ENCODE measurements at regions of chr1 and their contacts with region 1.

Region 1: DNA sequence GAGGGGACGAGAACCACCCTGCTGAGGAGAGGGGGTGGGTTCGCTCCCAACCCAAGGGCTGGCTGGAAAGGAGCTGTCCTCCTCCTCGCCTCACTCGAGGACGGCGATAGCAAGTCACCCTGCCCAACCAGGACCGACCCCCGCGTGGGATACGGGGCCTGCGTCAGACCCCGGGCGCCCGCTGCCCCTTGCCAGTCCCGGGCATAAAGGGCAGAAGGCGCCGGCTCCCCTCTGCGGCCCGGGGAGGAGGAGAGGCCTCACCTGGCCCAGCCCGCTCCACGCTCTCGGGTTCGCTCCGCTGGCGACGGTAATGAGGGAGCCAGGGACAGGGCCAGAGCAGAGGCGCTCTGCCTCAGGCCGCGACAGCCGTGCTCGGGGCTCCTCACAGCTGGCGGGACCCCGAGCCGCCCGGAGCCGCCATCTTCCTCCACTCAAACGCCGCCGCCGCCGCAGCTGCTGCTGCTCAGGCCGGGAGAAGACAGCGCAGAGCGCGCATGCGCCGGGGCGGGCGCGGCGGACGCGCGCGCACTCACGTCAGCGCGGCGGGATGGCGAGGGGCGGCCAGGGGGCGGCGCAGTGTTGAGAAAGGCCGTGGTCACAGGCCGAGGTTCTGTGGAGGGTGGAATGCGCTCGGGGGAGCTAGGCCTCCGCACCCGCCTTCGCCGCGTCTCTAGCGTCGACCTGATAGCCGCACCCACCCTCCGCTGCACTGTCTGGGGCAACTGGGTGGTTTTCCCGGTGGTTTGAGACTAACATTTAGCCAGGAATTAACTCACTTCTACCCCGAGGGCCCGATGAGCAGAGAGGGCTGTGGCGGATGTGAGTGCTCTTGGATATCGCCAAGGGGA is at the start of gene FBXO42:
- DNase-seq: peak; percentile 80
- H3K4me3 ChIP-seq: peak within 1 kb of the TSS; percentile 97
- H3K27ac ChIP-seq: peak within 1 kb of the TSS; percentile 90
- H3K27me3 ChIP-seq: no peaks in the 10 kb centered on the region
- CTCF ChIP-seq: peak; percentile 57
- polyA plus RNA-seq, gene FBXO42: 15.1 and 16.8 TPM in 2 replicates

Region 2: DNA sequence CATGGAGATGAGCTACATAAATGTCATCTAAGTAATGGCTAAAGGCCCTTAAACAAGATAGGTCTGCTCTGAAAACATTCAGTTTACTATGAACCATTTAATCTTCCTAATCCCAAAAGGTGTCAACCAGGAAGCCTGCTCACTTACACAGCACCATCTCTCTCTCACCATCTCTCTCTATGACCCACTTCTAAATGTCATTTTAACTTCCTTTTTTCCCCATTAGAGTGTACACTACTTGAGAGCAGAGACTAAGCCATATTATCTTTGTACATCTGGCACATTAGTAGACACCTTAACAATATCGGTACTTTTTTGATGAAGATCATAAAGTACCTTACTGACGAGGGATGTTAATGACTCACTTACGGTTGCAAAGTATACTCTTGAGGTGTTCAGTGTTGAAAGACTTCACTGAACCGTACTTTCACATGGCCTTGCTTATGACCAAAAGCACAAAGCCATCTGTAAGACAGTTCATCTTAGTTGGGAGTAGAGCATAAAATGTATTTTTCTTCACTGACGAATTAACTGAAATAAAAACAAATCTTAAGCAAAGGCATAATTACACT is 25.3 kb before region 1 on chr1:
- CTCF ChIA-PET with region 1: interaction called, 11 read pairs
- POLR2A ChIA-PET with region 1: no interaction called
- DNase-seq: no peak
- H3K4me3 ChIP-seq: no peak overlapping the region
- H3K27ac ChIP-seq: no peak overlapping the region
- H3K27me3 ChIP-seq: no peaks in the 10 kb centered on the region
- CTCF ChIP-seq: no peak

Region 3: GRCh38 chr1:16334655-16335340 is 17.4 kb before region 1 on chr1:
- CTCF ChIA-PET with region 1: interaction called, 3 read pairs
- POLR2A ChIA-PET with region 1: interaction called, 11 read pairs
- DNase-seq: no peak
- H3K4me3 ChIP-seq: no peak overlapping the region
- H3K27ac ChIP-seq: no peak overlapping the region
- H3K27me3 ChIP-seq: no peaks in the 10 kb centered on the region
- CTCF ChIP-seq: no peak

Region 4: DNA sequence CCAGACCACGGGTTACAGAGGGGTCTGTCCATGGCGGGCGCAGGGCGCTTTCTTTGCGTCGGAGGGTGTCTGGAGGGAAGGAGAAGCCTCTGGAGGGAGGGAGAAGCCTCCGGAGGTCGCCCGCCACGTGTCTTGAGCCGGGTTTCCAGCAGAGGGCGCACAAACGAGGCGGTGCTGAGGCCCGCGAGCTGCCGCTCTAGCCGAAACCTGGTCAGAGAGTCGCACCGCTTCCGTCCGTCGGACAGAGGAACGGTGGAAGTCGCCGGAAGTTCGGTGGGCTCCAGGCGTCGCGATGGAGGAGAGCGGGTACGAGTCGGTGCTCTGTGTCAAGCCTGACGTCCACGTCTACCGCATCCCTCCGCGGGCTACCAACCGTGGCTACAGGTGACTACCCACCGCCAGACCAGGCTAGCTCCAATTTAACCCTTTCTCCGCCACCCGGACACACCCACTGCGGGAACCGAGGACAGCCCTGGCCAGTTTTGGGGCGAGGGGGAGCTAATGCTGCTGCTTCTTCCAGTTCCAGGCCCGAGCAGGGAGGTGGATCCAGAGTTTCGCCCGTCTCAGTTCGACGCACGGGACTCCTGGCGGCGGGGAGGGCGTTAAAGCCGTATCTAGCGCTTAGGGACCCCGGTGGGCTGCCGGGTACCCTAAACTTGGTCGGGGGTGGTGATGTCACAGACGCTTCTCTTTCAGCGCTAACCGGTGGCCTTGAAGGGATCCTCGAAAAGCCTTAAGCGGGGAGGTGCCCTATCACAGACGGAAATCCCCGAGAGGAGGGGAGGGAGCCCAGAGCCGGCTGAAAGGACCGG is 88.5 kb after region 1 on chr1 and contains the start of gene NECAP2:
- CTCF ChIA-PET with region 1: no interaction called
- POLR2A ChIA-PET with region 1: no interaction called
- DNase-seq: peak; percentile 85
- H3K4me3 ChIP-seq: peak within 1 kb of the TSS; percentile 99
- H3K27ac ChIP-seq: peak within 1 kb of the TSS; percentile 82
- H3K27me3 ChIP-seq: no peaks in the 10 kb centered on the region
- CTCF ChIP-seq: peak; percentile 72
- polyA plus RNA-seq, gene NECAP2: 108 and 111 TPM in 2 replicates

Measured in AG04450 (cell line).